GM23248 (cell line): ENCODE measurements at regions of chr15 and their contacts with region 1.

Region 1: DNA sequence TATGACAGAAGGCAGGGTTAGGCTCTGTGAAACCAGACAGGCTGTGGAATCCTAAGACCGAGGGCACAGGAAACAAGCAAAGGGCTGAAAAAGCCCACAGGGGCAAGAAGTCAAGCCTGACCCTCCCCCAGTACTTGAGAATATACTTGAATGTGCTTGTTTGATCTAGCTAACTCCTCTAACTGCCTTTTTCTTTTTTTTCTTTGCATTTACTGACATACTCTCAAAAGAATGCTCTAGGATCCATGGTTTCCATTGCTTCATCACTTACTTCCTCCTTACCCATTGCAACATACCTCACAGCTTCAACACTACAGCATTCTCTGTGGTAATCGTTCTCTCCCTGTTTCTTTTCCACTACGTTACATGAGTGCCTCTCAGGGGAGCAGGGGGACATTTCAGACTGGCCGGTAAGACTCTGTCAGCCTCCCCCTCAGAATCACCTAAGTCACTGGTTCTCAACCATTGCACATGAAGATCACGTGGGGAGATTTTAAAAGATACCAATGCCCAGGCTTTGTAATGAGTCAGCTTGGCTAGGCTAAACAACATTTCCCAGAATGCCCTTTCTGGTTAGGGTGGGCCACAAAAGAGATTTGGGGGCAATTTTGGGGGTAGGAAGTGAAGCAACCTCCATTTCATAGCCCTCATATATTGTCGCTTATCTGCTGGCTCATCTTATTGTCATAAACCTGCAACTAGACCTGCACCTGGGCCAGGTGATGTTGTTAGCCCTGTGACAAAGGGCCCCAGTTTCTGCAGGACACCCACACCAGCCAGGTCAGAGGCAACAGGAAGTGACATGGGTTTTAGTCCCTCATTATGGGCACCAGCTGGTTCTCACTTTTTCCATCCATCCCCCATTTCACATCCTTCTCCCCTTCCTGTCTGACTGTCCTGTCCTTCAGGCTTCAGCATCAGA is 24.6 kb upstream of the RSL24D1 start:
- DNase-seq: peak; percentile 95
- H3K4me3 ChIP-seq: peak overlapping the region; percentile 48
- H3K27ac ChIP-seq: peak overlapping the region; percentile 94
- H3K4me1 ChIP-seq: peaks cover 19% of the 10 kb centered on the region
- H3K27me3 ChIP-seq: no peaks in the 10 kb centered on the region

Region 2: GRCh38 chr15:55290528-55291057 is 69.2 kb after region 1 on chr15:
- in situ Hi-C with region 1: loop called (anchors 5 kb)
- DNase-seq: peak; percentile 90
- H3K4me3 ChIP-seq: peak overlapping the region; percentile 86
- H3K27ac ChIP-seq: peak overlapping the region; percentile 55
- H3K4me1 ChIP-seq: 0 out of 2 replicates have a peak, but pooled peaks cover 3% of the 10 kb centered on the region
- H3K27me3 ChIP-seq: no peaks in the 10 kb centered on the region

Region 3: GRCh38 chr15:55434989-55435825 is 213.9 kb after region 1 on chr15:
- in situ Hi-C with region 1: loop called (anchors 10 kb)
- DNase-seq: peak; percentile 78
- H3K4me3 ChIP-seq: no peak overlapping the region
- H3K27ac ChIP-seq: no peak overlapping the region
- H3K4me1 ChIP-seq: no peaks in the 10 kb centered on the region
- H3K27me3 ChIP-seq: no peaks in the 10 kb centered on the region

Region 4: DNA sequence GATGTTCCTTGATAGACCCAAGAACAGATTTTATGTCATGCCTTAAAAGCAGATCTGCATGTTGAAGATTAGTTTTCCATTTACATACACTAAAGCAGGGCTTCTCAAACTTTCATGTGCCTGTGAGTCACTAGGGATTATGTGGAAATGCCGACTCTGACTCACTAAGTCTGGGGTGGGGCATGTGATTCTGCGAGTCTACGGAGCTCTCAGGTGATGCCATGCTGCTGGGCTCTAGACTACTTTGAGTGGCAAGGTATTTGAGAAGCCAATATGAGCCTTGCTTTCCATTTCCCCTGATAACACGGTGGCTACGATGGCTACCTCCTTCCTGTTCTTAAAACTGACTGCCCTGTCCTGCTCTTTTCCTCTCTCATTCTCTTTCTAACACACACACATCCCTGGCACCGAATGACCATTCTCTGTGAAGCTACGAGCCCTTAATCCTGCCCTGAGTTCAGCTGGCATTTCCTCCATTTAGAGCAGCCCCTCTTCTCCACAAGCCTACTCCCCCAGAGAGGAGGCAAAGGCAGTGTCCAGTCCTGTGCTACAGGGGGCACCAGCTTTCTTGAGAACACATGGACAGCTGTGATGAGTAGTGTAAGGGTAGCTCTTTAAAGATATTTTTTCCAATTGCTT is 406.5 kb after region 1 on chr15:
- in situ Hi-C with region 1: loop called (anchors 25 kb)
- DNase-seq: peak; percentile 93
- H3K4me3 ChIP-seq: no peak overlapping the region
- H3K27ac ChIP-seq: no peak overlapping the region
- H3K4me1 ChIP-seq: no peaks in the 10 kb centered on the region
- H3K27me3 ChIP-seq: no peaks in the 10 kb centered on the region; the same call in 1 of the 2 replicates